PC-3 (cell line): ENCODE measurements at regions of chr1 and their contacts with region 1.

Region 1: DNA sequence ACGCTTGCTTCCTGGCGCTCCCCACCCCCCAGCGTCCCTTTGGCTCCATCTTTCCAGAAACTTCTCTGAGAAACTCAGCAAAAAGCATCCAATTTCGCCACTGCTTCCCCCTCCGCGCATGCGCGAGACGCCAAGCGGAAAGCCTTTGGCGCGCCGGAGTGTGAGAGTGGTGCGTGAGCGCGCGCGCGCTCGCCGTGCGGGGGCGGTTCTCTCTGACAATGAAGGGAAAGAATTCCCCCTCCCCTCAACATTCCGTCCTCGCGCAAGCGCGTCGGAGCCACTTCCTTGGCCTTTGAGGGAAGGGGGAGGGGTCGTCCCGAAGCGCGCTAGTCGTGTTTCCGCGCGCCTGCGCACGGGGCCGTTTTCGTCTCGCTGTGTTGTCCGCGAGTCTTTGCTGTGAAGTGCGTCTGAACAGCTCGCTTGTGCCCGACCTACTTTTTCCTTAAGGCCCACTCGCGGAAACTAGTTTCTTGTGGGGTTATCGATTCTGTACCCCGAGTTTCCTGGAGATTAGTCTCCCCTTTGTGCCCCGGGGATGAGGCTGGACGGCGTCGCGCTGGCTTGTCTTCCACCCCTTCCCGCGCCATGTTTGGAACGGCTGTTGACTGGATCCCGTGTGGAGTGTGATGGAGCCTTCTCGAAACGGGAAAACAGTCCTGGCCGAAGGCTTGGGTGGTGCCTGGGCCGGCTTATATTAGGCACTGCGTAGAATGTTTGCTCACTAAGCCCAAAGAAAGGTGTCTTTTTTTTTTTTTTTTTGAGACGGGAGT is 11.6 kb upstream of the SPEN start:
- DNase-seq: peak; percentile 99
- ATAC-seq: peak; percentile 58
- H3K4me3 ChIP-seq: peak overlapping the region; percentile 74
- H3K27ac ChIP-seq: peak overlapping the region; percentile 100
- H3K4me1 ChIP-seq: peaks cover 19% of the 10 kb centered on the region
- H3K27me3 ChIP-seq: no peaks in the 10 kb centered on the region
- CTCF ChIP-seq: no peak

Region 2: DNA sequence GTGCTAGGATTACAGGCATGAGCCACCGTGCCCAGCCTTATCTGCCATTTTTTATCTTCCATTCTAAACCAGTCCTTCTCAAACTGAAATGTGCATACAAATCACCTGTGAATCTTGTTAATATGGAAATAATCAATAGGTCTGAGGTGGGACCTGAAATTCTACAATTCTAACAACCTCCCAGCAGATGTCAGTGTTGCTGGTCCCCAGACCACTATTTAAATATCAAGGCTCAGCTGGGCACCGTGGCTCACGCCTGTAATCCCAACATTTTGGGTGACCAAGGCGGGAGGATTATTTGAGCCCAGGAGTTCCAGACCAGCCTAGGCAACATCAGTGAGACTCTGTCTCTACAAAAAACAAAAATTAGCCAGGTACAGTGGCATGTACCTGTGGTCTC is 32.6 kb before region 1 on chr1:
- CTCF ChIA-PET with region 1: interaction called, 12 read pairs
- POLR2A ChIA-PET with region 1: interaction called, 12 read pairs
- intact Hi-C with region 1: no loop called
- DNase-seq: peak; percentile 59
- ATAC-seq: no peak
- H3K4me3 ChIP-seq: no peak overlapping the region
- H3K27ac ChIP-seq: no peak overlapping the region
- H3K4me1 ChIP-seq: peaks cover 46% of the 10 kb centered on the region
- H3K27me3 ChIP-seq: no peaks in the 10 kb centered on the region
- CTCF ChIP-seq: peak; percentile 59

Region 3: DNA sequence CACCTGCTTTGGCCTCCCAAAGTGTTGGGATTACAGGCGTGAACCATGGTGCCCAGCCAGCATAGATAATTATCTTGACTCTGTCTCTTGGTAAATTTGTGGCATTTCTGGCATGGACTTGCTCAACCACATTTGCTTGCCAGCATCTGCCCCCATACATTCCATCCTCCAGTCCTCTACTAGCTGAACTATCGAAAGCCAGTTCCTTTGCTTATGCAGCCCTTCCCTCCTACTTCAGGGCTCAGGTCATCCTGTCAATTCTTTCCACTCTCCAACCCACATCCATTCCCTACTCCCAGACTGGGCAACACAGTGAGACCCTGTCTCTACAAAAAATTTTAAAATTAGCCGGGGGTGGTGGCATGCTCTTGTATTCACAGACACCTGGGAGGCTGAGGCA is 15.4 kb before region 1 on chr1:
- CTCF ChIA-PET with region 1: interaction called, 11 read pairs
- POLR2A ChIA-PET with region 1: interaction called, 12 read pairs
- intact Hi-C with region 1: no loop called
- DNase-seq: no peak
- ATAC-seq: no peak
- H3K4me3 ChIP-seq: no peak overlapping the region
- H3K27ac ChIP-seq: no peak overlapping the region
- H3K4me1 ChIP-seq: peaks cover 3% of the 10 kb centered on the region; the same call in 1 of the 2 replicates
- H3K27me3 ChIP-seq: no peaks in the 10 kb centered on the region
- CTCF ChIP-seq: no peak

Region 4: GRCh38 chr1:15825800-15826199 is 10.1 kb before region 1 on chr1:
- CTCF ChIA-PET with region 1: interaction called, 11 read pairs
- POLR2A ChIA-PET with region 1: interaction called, 6 read pairs
- intact Hi-C with region 1: no loop called
- DNase-seq: no peak
- ATAC-seq: no peak
- H3K4me3 ChIP-seq: no peak overlapping the region
- H3K27ac ChIP-seq: no peak overlapping the region
- H3K4me1 ChIP-seq: peaks cover 11% of the 10 kb centered on the region
- H3K27me3 ChIP-seq: no peaks in the 10 kb centered on the region
- CTCF ChIP-seq: no peak

Region 5: DNA sequence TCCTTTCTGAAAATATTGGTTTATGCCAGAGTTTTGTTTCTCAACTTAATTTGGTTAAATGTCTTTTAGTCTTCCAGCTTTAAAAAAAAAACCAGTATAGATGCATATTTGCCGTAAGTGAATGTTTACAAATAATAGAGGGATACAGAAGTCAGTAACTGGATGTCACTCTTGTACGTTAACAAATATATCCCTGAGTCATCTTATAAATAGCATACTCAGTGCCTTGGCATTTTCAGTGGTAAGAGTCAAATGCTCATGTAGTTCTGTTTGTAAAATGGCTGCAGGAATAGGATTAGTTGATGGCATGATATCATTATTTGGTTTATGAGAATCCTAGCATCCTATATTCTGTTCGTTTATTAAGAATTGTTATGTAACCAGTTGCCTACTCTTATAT is 67.0 kb after region 1 on chr1:
- CTCF ChIA-PET with region 1: no interaction called
- POLR2A ChIA-PET with region 1: interaction called, 10 read pairs
- intact Hi-C with region 1: no loop called
- DNase-seq: peak; percentile 89
- ATAC-seq: peak; percentile 96
- H3K4me3 ChIP-seq: no peak overlapping the region; the same call in 1 of the 2 replicates
- H3K27ac ChIP-seq: peak overlapping the region; percentile 41
- H3K4me1 ChIP-seq: peaks cover 22% of the 10 kb centered on the region
- H3K27me3 ChIP-seq: no peaks in the 10 kb centered on the region
- CTCF ChIP-seq: no peak

Region 6: GRCh38 chr1:16289963-16290362 is 454.0 kb after region 1 on chr1:
- CTCF ChIA-PET with region 1: no interaction called
- POLR2A ChIA-PET with region 1: no interaction called
- intact Hi-C with region 1: no loop called
- DNase-seq: peak; percentile 22
- ATAC-seq: peak; percentile 54
- H3K4me3 ChIP-seq: no peak overlapping the region
- H3K27ac ChIP-seq: no peak overlapping the region
- H3K4me1 ChIP-seq: no peaks in the 10 kb centered on the region
- H3K27me3 ChIP-seq: no peaks in the 10 kb centered on the region
- CTCF ChIP-seq: peak; percentile 50